ENCODE measurements at regions of chr22 and their contacts with region 1.

Region 1: DNA sequence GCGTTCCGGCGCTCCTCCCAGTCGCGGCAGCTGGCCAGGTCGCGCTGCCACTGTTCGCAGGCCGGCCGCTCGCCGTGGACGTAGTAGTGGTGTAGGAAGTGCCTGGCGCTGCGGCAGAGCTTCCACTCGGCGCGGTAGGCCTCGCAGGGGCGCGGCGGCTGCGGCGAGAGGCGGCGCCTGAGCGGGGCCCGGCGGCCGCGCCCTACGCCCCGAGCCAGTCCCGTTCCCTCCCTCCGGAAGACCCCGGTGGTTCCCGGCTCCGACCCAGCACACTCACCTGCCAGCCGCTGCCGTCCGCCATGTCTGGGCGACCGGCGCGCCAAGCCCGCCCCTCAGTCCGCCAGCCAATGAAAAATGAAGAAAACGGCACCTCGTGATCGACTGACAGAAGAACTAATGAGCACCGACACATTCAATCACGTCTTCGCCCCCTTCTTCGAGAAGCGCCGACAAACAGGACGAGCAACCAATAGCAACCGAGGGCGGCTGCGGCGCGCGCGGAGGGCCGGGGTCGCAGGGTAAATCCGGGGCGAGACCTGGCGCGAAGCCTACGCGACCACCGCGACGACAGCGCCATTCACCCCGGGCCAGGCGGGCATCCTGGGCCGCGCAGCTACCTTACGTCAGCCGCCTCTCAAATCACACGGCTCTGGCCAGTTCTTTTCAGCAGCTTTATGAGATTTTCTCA is at the start of gene C22orf39:
- H3K4me3 ChIP-seq: peak within 1 kb of the TSS; percentile 79
- H3K27ac ChIP-seq: peak within 1 kb of the TSS; percentile 78
- H3K4me1 ChIP-seq: no peaks in the 10 kb centered on the region
- CTCF ChIP-seq: no peak

Region 2: GRCh38 chr22:19432133-19432851 is 15.2 kb before region 1 on chr22 and contains the start of gene MRPL40:
- CTCF ChIA-PET with region 1: interaction called, 9 read pairs
- POLR2A ChIA-PET with region 1: interaction called, 13 read pairs
- H3K4me3 ChIP-seq: peak within 1 kb of the TSS; percentile 90
- H3K27ac ChIP-seq: peak within 1 kb of the TSS; percentile 67
- H3K4me1 ChIP-seq: no peaks in the 10 kb centered on the region; the same call in 1 of the 2 replicates
- CTCF ChIP-seq: no peak; the same call in 1 of the 2 replicates

Region 3: GRCh38 chr22:19460036-19460435 is 12.5 kb after region 1 on chr22:
- CTCF ChIA-PET with region 1: no interaction called
- POLR2A ChIA-PET with region 1: no interaction called
- H3K4me3 ChIP-seq: no peak overlapping the region
- H3K27ac ChIP-seq: no peak overlapping the region
- H3K4me1 ChIP-seq: no peaks in the 10 kb centered on the region
- CTCF ChIP-seq: no peak

Region 4: DNA sequence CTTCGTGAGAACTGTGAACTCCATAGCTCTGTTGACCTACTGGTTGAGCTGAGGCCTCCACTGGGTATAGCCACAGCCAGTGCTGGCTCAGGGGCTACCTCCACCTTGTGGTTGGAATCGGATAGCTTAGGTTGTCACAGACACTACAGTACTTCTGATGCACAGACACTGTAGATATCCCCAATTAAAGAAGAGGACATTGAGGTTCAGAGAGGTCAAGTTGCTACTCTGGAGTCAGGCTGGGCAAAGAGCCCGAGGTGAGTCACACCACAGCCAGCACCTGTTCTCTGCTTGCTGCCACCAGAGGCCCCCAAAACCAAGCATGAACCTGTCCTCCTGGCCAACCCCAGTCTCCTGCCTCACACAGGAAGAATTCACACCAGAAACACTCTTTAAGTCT is 26.0 kb after region 1 on chr22:
- CTCF ChIA-PET with region 1: interaction called, 11 read pairs
- POLR2A ChIA-PET with region 1: interaction called, 3 read pairs
- H3K4me3 ChIP-seq: no peak overlapping the region
- H3K27ac ChIP-seq: no peak overlapping the region
- H3K4me1 ChIP-seq: no peaks in the 10 kb centered on the region
- CTCF ChIP-seq: peak; percentile 22; the same call in 1 of the 2 replicates

Region 5: DNA sequence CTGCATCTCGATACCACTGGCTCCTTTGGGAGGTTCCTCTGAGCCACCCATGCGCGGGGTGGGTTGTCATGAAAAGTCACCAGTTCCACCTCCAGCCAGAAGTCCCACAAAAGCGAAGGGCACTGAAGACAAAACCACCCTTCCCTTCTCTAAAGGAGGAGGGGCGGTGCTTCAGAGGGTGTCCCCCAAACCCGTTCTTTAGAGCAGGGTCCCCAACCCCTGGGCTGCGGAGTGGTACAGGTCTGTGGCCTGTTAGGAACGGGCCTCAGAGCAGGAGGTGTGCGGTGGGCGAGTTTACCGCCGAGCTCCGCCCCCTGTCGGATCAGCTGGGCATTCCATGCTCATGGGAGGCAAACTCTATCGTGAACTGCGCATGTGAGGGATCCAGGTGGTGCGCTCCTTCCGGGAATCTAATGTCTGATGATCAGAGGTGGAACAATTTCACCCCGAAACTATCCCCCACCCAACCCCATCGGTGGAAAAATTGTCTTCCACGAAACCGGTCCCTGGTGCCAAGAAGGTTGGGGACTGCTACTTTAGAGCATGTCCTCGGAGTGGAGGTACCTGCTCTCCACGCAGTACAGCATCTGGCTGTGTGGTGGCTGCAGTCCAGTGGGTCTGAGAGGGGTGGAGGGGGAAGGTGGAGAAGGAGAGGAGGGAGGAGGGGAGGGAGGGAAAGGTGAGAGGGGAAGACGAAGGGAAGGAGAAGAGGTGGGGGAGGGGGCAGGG is 193.9 kb after region 1 on chr22:
- CTCF ChIA-PET with region 1: no interaction called
- POLR2A ChIA-PET with region 1: no interaction called
- H3K4me3 ChIP-seq: peak overlapping the region; percentile 9; the same call in 1 of the 2 replicates
- H3K27ac ChIP-seq: no peak overlapping the region
- H3K4me1 ChIP-seq: no peaks in the 10 kb centered on the region
- CTCF ChIP-seq: no peak

Measured in HEK293 (cell line).